MCF 10A (cell line): ENCODE measurements at regions of chr3 and their contacts with region 1.

Region 1: DNA sequence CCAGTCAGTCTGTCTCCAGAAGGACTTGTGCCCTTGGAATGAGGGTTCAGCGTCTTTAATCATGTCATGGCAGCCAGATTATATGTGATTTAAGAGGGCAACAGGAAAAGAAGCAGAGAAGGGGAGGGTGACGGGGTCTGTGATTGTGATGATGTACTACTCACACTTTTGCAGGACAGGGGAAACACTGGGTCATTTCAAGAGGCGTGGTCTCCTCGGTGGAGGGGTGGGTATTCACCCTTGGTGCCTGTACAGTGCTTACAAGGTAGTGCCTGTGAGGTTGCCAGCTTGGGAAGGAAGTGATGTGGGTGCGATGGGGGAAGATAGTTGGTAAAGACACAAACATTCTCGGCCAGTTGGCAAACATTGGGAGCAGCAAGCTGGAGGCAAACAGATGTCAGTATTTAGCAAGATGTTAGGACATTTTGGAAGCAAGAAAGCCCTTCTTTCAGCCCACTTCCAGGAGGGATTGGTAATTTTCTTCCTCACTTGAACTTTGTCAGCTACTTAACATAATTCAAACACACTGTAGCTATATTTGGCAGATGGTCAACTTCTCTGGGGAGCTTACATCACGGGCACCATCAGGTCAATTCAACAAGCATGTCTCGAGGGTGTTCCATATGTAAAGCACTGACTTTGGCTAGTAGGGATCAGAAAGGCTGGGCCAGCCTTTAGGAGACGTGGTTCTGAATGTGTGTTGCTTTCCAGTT is 71.4 kb upstream of the ROPN1 start:
- DNase-seq: no peak
- H3K4me3 Mint-ChIP-seq: no peak overlapping the region
- H3K27ac Mint-ChIP-seq: no peak overlapping the region
- H3K4me1 Mint-ChIP-seq: no peaks in the 10 kb centered on the region
- H3K27me3 Mint-ChIP-seq: peaks cover 16% of the 10 kb centered on the region
- CTCF ChIP-seq: no peak

Region 2: GRCh38 chr3:124032648-124033359 is 30.5 kb before region 1 on chr3:
- CTCF ChIA-PET with region 1: interaction called, 11 read pairs
- POLR2A ChIA-PET with region 1: interaction called, 3 read pairs
- intact Hi-C with region 1: no loop called
- DNase-seq: peak; percentile 65
- H3K4me3 Mint-ChIP-seq: peak overlapping the region; percentile 72
- H3K27ac Mint-ChIP-seq: no peak overlapping the region
- H3K4me1 Mint-ChIP-seq: peaks cover 8% of the 10 kb centered on the region
- H3K27me3 Mint-ChIP-seq: peaks cover 44% of the 10 kb centered on the region
- CTCF ChIP-seq: peak; percentile 77

Region 3: DNA sequence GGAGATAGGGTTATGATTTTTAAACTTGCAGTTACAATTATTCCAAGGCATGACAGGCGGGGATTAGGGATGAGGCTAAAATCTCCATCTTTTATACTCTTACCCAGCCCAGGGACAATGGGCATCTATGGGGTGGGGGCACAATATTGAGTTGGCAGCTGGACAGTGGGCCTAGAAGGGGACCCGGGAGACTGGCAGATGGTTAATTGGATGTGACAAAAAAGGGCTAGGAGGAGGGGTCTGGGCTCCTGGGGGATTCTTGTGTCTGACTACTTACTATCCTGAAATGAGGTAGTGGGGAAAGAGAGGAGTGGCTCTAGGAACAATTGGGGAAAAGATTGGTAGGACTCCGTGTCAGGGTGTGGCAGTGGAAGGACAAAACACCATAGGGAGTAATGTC is 18.4 kb before region 1 on chr3:
- CTCF ChIA-PET with region 1: no interaction called
- POLR2A ChIA-PET with region 1: no interaction called
- intact Hi-C with region 1: no loop called
- DNase-seq: no peak
- H3K4me3 Mint-ChIP-seq: no peak overlapping the region
- H3K27ac Mint-ChIP-seq: no peak overlapping the region
- H3K4me1 Mint-ChIP-seq: no peaks in the 10 kb centered on the region
- H3K27me3 Mint-ChIP-seq: peaks cover 44% of the 10 kb centered on the region
- CTCF ChIP-seq: no peak